Gastrocnemius medialis (tissue), 4 donors: ENCODE measurements at regions of chr13 and their contacts with region 1.

Region 1: GRCh38 chr13:73465617-73465971 is 406.8 kb downstream of the KLF5 start:
- DNase-seq: no peak
- ATAC-seq: peak; percentile 41 to 57
- H3K4me3 ChIP-seq: no peak overlapping the region
- H3K27ac ChIP-seq: peak overlapping the region; percentile 62 to 80 (median 78)
- H3K4me1 ChIP-seq: peaks cover 4 to 16% of the 10 kb centered on the region in 2 donors
- H3K27me3 ChIP-seq: no peaks in the 10 kb centered on the region
- CTCF ChIP-seq: no peak
- POLR2A ChIP-seq: no peak

Region 2: DNA sequence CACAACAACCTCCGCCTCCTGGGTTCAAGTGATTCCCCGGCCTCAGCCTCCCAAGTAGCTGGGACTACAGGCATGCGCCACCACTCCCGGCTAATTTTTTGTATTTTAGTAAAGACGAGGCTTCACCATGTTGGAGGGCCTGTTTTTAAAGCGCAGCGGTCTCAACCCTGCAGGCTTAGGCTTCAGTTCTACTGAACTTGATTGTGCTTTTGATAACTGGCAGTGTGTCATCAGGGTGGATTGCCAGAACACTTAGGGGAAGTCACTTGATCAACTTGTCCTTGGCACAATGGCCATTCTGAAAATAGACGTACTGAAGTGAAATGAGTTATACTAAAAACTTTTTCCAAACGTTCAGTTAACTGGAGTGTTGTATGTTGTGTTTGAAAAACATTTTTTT is 65.4 kb after region 1 on chr13:
- in situ Hi-C with region 1: loop called in 1 of 4 experiments (anchors 5 kb)
- intact Hi-C with region 1: loop called (anchors 5 kb)
- DNase-seq: peak; percentile 56 to 71
- ATAC-seq: peak; percentile 96
- H3K4me3 ChIP-seq: no peak overlapping the region
- H3K27ac ChIP-seq: peak overlapping the region; percentile 57 to 84 (median 81)
- H3K4me1 ChIP-seq: peaks cover 19% of the 10 kb centered on the region in 2 donors
- H3K27me3 ChIP-seq: no peaks in the 10 kb centered on the region
- CTCF ChIP-seq: no peak
- POLR2A ChIP-seq: no peak